ENCODE measurements at regions of chr19 and their contacts with region 1.

Region 1: GRCh38 chr19:14689598-14690503 is at the start of gene ZNF333:
- DNase-seq: peak; percentile 100
- H3K4me3 Mint-ChIP-seq: peak within 1 kb of the TSS; percentile 83
- H3K27ac Mint-ChIP-seq: peak within 1 kb of the TSS; percentile 97
- H3K4me1 Mint-ChIP-seq: peaks cover 20% of the 10 kb centered on the region
- H3K27me3 Mint-ChIP-seq: no peaks in the 10 kb centered on the region
- total RNA-seq, gene ZNF333: 16.7 to 18.0 TPM

Region 2: DNA sequence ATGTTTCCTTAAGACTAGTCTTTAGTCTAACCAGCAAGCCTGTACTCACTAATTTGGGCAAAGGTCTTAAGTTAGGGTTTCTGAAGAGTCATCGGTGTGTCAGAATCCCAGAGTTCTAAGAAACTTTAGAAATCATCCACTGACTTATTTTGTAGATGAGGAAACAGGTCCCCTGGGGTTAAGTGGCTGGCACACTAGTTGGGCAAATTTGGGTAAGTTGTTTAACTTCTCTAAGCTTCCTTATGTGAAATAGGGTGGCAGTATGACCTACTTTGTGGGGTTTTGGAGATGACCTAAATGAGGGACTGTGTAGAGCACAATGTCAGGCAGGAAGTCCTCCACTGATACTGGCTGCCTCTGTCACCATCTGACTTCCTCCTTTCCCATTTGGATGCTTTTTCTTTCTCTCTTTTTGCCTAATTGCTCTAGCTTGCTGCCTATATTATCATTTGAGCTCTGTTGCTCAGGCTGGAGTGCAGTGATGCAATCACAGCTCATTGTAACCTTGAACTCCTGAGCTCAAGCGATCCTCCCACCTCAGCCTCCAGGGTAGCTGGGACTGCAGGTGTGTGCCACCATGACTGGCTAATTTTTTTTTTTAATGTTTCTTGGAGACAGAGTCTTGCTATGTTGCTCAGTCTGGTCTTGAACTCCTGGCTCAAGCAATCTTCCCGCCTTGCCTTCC is 17.5 kb before region 1 on chr19:
- CTCF ChIA-PET with region 1: interaction called, 24 read pairs
- POLR2A ChIA-PET with region 1: no interaction called
- intact Hi-C with region 1: no loop called
- DNase-seq: no peak
- H3K4me3 Mint-ChIP-seq: no peak overlapping the region
- H3K27ac Mint-ChIP-seq: no peak overlapping the region
- H3K4me1 Mint-ChIP-seq: peaks cover 20% of the 10 kb centered on the region
- H3K27me3 Mint-ChIP-seq: peaks cover 15% of the 10 kb centered on the region